MCF 10A (cell line): ENCODE measurements at regions of chr11 and their contacts with region 1.

Region 1: DNA sequence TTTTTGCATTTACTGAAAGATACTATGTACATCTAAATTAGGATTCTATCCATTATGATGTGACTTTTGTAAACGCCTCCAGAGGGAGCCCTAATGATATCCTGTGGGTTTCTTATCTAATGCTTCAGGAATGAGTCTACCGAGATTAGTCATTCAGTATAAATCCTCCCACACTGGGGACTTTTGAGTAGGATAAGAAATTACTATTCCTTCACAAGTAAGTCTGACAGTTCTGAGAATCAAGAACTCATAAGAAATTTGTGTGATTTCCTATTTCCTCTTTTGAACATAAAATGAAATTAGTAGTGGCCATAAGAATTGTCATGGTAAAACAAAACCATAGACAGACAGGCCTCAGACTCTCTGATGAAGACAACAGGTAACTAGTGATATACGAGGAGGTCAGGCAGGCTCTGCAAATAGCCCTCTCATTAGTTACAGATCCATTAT is 10.0 kb upstream of the OR5M1 start:
- DNase-seq: peak; percentile 77
- H3K4me3 Mint-ChIP-seq: no peak overlapping the region
- H3K27ac Mint-ChIP-seq: no peak overlapping the region
- H3K4me1 Mint-ChIP-seq: no peaks in the 10 kb centered on the region
- H3K27me3 Mint-ChIP-seq: peaks cover 17% of the 10 kb centered on the region
- CTCF ChIP-seq: peak; percentile 41

Region 2: DNA sequence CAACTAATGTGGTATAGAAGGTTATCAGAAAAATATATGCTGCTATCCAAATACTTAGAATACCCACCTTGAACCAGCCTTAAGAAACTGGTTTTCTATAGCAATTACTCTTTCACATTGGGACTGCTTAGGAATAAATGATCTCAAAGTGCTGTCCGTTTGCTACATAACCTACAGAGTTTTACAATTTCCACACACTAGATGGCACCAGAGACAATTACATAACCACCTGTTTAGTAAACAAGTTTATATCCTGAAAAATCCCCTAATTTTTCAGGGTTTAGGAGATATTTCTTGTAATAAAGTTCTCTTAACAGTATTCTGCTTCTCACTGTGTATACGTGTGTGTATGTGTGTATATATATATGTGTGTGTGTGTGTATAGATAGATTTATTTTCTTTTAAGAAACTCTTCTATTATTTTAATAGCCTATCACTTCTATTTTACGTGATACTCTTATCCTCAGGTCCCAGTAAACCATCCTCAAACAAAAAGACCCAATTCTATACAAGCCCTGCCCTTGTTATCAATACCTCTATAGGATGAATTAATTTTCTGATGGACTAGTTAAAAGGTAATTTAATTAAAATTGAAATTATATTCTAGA is 681.8 kb before region 1 on chr11:
- CTCF ChIA-PET with region 1: no interaction called
- POLR2A ChIA-PET with region 1: no interaction called
- intact Hi-C with region 1: loop called (anchors 5 kb)
- DNase-seq: peak; percentile 23
- H3K4me3 Mint-ChIP-seq: no peak overlapping the region
- H3K27ac Mint-ChIP-seq: no peak overlapping the region
- H3K4me1 Mint-ChIP-seq: no peaks in the 10 kb centered on the region
- H3K27me3 Mint-ChIP-seq: no peaks in the 10 kb centered on the region
- CTCF ChIP-seq: peak; percentile 48

Region 3: GRCh38 chr11:56160217-56160616 is 464.5 kb before region 1 on chr11 and contains the start of gene OR8K5:
- CTCF ChIA-PET with region 1: no interaction called
- POLR2A ChIA-PET with region 1: no interaction called
- intact Hi-C with region 1: no loop called
- DNase-seq: no peak
- H3K4me3 Mint-ChIP-seq: no peak within 1 kb of the TSS
- H3K27ac Mint-ChIP-seq: no peak within 1 kb of the TSS
- H3K4me1 Mint-ChIP-seq: no peaks in the 10 kb centered on the region
- H3K27me3 Mint-ChIP-seq: no peaks in the 10 kb centered on the region
- CTCF ChIP-seq: no peak
- total RNA-seq, gene OR8K5: not detected in 2 replicates

Region 4: DNA sequence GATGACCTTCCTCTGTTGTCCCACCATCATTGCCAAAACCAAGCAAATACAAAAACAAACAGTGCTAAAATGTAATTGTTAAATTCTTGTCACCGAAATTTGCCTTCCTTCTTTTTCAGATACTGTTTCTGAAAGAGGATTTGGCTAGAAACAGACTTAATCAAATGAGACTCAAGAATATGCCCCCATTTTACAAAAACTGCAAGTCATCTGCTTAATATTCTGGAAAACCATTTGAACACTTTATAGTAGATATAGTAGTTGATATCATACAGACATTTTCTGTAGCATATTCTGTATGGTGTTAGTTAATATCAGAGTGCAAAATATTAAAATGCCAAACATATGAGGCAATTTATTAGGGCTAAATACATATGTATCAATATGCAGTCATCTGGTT is 13.5 kb before region 1 on chr11:
- CTCF ChIA-PET with region 1: interaction called, 14 read pairs
- POLR2A ChIA-PET with region 1: no interaction called
- intact Hi-C with region 1: no loop called
- DNase-seq: no peak
- H3K4me3 Mint-ChIP-seq: no peak overlapping the region
- H3K27ac Mint-ChIP-seq: no peak overlapping the region
- H3K4me1 Mint-ChIP-seq: no peaks in the 10 kb centered on the region
- H3K27me3 Mint-ChIP-seq: peaks cover 14% of the 10 kb centered on the region
- CTCF ChIP-seq: no peak

Region 5: DNA sequence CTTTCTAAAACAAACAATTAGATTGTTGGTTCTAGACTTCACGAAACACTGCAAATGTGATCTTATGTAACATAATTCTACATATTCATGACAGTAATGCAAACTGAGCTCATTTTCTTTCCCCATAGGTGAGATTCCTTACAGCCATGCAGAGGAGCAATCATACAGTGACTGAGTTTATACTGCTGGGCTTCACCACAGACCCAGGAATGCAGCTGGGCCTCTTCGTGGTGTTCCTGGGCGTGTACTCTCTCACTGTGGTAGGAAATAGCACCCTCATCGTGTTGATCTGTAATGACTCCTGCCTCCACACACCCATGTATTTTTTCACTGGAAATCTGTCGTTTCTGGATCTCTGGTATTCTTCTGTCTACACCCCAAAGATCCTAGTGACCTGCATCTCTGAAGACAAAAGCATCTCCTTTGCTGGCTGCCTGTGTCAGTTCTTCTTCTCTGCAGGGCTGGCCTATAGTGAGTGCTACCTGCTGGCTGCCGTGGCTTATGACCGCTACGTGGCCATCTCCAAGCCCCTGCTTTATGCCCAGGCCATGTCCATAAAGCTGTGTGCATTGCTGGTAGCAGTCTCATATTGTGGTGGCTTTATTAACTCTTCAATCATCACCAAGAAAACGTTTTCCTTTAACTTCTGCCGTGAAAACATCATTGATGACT is 75.7 kb after region 1 on chr11:
- CTCF ChIA-PET with region 1: interaction called, 6 read pairs
- POLR2A ChIA-PET with region 1: no interaction called
- intact Hi-C with region 1: loop called (anchors 10 kb)
- DNase-seq: peak; percentile 21
- H3K4me3 Mint-ChIP-seq: no peak overlapping the region
- H3K27ac Mint-ChIP-seq: no peak overlapping the region
- H3K4me1 Mint-ChIP-seq: no peaks in the 10 kb centered on the region
- H3K27me3 Mint-ChIP-seq: no peaks in the 10 kb centered on the region
- CTCF ChIP-seq: no peak

Region 6: DNA sequence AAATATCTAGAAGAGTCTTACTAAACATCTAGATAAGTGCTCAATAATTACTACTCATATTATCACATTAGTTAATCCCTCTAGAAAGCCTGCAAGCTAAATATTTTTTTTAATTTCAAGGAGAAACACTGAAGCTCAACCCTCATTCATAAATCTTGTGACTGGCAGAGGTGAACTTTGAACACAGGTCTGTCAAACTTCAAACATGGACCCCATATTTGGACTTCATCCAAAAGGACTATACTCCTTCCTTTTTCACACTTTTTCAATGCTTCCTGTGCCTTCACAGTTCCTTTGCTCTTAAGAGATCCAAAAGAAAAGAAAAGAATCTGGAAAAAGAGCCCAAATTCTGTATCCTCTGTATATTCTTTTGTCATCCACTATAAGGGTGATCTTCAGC is 152.1 kb after region 1 on chr11:
- CTCF ChIA-PET with region 1: interaction called, 111 read pairs
- POLR2A ChIA-PET with region 1: no interaction called
- intact Hi-C with region 1: no loop called
- DNase-seq: no peak
- H3K4me3 Mint-ChIP-seq: no peak overlapping the region
- H3K27ac Mint-ChIP-seq: no peak overlapping the region
- H3K4me1 Mint-ChIP-seq: no peaks in the 10 kb centered on the region
- H3K27me3 Mint-ChIP-seq: no peaks in the 10 kb centered on the region
- CTCF ChIP-seq: no peak